Ascending aorta (tissue), 2 donors: ENCODE measurements at regions of chr2 and their contacts with region 1.

Region 1: GRCh38 chr2:129388870-129389269 is 590.6 kb upstream of the RAB6C start:
- DNase-seq: no peak
- H3K4me3 ChIP-seq: no peak overlapping the region
- H3K27ac ChIP-seq: no peak overlapping the region
- H3K4me1 ChIP-seq: no peaks in the 10 kb centered on the region
- H3K27me3 ChIP-seq: no peaks in the 10 kb centered on the region
- CTCF ChIP-seq: no peak

Region 2: DNA sequence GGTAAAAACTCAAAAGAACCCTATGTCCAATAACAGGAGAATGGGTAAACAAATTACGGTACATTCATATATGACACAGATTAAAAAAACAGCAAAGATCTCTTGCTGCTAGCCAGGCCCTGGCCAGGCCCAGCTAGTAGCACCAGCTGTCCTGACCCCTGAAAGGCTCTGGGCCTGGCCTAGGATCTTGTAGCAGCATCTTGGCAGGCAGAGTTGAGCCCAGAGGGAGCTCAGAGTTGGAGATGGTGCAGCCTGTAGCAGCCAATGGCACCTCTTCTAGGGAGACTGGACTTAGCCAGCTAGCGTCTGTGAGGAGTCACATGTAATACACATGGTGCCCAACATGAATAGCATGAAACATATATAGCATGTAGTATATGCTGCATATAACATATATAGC is 1139.3 kb before region 1 on chr2:
- intact Hi-C with region 1: loop called (anchors 10 kb)
- DNase-seq: no peak
- H3K4me3 ChIP-seq: no peak overlapping the region
- H3K27ac ChIP-seq: no peak overlapping the region
- H3K4me1 ChIP-seq: no peaks in the 10 kb centered on the region
- H3K27me3 ChIP-seq: no peaks in the 10 kb centered on the region
- CTCF ChIP-seq: no peak